ENCODE measurements at regions of chr20 and their contacts with region 1.

Region 1: DNA sequence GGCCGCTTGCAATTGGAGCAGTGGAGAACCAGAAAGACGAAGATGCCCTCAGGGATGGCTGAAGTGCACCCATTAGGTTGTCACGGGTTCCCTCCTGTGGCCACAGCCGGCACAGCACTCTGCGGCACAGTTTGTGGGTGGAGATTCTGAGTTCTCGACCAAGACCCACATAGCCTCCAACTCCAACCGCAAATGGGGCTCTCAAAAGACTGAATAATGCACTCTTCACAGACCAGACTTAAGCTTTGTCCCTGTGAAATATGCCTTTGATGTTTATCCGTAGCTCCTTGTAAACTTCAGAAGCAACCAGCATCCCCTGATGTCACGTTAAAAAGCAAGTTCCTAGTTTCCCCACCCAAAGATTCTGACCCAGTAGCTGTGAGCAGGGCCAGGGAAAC is 934 bp upstream of the CST9 start:
- DNase-seq: peak; percentile 69 to 88 (median 77)
- ATAC-seq: peak; percentile 71 to 95 (median 90)
- H3K4me3 ChIP-seq: no peak overlapping the region
- H3K27ac ChIP-seq: no peak overlapping the region
- H3K4me1 ChIP-seq: peaks cover 0 to 13% (median 0%) of the 10 kb centered on the region in 12 donors
- H3K27me3 ChIP-seq: peaks cover 0 to 8% (median 0%) of the 10 kb centered on the region in 9 donors
- CTCF ChIP-seq: peak; percentile 71 to 92 (median 88)
- POLR2A ChIP-seq: no peak

Region 2: DNA sequence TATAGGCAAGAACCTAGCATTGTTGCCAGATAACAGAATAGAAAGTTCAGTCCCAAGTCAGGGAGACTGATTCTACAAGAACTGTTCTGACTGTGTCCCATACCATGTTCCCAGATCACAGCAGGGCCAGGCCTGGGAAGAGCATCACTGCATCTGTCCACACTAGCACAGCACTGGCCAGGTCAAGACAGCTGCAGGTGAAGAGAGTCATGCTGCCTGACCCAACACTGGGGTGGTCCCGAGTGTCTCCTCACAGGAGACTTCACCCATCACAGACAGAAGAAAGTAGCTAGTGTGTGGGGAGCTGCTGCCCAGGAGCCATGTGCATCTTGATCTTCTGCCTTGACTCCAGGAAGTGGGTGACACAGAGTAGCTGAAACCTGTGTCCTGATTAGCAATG is 37.1 kb before region 1 on chr20:
- intact Hi-C with region 1: no loop called
- DNase-seq: no peak
- ATAC-seq: no peak
- H3K4me3 ChIP-seq: no peak overlapping the region
- H3K27ac ChIP-seq: no peak overlapping the region
- H3K4me1 ChIP-seq: no peaks in the 10 kb centered on the region
- H3K27me3 ChIP-seq: no peaks in the 10 kb centered on the region
- CTCF ChIP-seq: no peak
- POLR2A ChIP-seq: no peak

Region 3: GRCh38 chr20:23631981-23632710 is 25.5 kb after region 1 on chr20:
- intact Hi-C with region 1: loop called in 2 of 10 experiments (anchors 2 kb)
- DNase-seq: peak in 3 of 5 donors; percentile 51 to 76 (median 60)
- ATAC-seq: peak in 1 of 4 donors; percentile 7
- H3K4me3 ChIP-seq: no peak overlapping the region
- H3K27ac ChIP-seq: peak overlapping the region in 1 of 12 donors; percentile 51
- H3K4me1 ChIP-seq: peaks cover 3 to 79% (median 41%) of the 10 kb centered on the region in 12 donors
- H3K27me3 ChIP-seq: no peaks in the 10 kb centered on the region
- CTCF ChIP-seq: no peak
- POLR2A ChIP-seq: no peak

Region 4: GRCh38 chr20:23637282-23638221 is 30.9 kb after region 1 on chr20 and contains the start of gene CST3:
- intact Hi-C with region 1: loop called in 2 of 10 experiments (anchors 2 kb)
- DNase-seq: peak; percentile 93 to 95 (median 95)
- ATAC-seq: peak; percentile 64 to 89 (median 87)
- H3K4me3 ChIP-seq: peak within 1 kb of the TSS; percentile 59 to 100 (median 90)
- H3K27ac ChIP-seq: peak within 1 kb of the TSS; percentile 87 to 100 (median 96)
- H3K4me1 ChIP-seq: peaks cover 0 to 80% (median 36%) of the 10 kb centered on the region in 12 donors
- H3K27me3 ChIP-seq: no peaks in the 10 kb centered on the region
- CTCF ChIP-seq: peak in 3 of 12 donors; percentile 6 to 23 (median 22)
- POLR2A ChIP-seq: peak; percentile 47 to 94
- total RNA-seq, gene CST3: 482 to 1,194 (median 708) TPM

Region 5: GRCh38 chr20:23668477-23668951 is 61.9 kb after region 1 on chr20:
- intact Hi-C with region 1: loop called in 1 of 10 experiments (anchors 10 kb)
- DNase-seq: peak in 4 of 5 donors; percentile 40 to 54 (median 48)
- ATAC-seq: peak; percentile 47 to 76 (median 73)
- H3K4me3 ChIP-seq: no peak overlapping the region
- H3K27ac ChIP-seq: no peak overlapping the region
- H3K4me1 ChIP-seq: peaks cover 0 to 12% (median 1%) of the 10 kb centered on the region in 12 donors
- H3K27me3 ChIP-seq: no peaks in the 10 kb centered on the region
- CTCF ChIP-seq: peak; percentile 78 to 94 (median 84)
- POLR2A ChIP-seq: no peak